Ascending aorta (tissue), 2 donors: ENCODE measurements at regions of chrX and their contacts with region 1.

Region 1: DNA sequence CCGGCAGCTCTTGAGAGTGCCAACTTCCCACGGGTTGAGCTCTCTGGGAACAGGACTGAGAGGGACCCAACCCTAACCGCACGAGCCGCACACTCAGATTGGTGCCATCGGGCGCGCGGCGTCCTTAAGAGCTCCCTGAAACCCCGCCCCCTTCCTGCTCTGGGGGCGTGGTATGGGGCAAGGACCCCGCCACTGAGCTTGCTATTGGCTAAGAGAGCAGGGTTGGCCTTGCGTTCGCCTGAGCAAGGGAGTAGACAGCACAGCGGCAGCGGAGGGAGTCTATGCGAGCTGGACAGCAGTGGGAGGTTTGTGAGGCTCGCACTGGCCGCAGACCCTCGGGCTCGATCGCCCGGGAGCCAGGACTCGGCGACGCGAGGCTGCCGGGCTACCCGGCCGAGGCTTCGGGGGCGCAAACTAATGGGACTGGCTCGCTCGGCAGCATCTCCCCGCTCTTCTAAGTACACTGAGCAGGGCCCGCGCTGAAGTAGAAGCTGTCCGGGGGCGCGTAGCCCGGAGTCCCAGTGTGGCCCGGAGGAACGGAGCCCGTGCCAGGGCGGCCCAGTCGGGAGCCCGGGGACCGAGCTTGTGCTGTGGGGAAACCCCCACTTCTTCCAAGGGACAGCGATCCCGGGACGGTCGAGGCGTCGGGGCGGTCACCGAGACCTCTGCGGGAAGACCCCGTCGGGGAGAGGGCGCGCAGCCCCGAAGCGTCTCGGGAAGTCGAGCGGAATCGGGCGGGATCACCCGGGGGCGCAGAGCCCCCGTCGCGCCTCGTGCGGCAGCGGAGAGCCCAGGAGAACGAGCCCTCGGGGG is at the start of gene EFNB1:
- DNase-seq: peak; percentile 84 to 96
- H3K4me3 ChIP-seq: peak within 1 kb of the TSS; percentile 59 to 65
- H3K27ac ChIP-seq: peak within 1 kb of the TSS; percentile 76 to 82
- H3K4me1 ChIP-seq: no peaks in the 10 kb centered on the region
- H3K27me3 ChIP-seq: no peaks in the 10 kb centered on the region
- CTCF ChIP-seq: no peak
- total RNA-seq, gene EFNB1: 53.4 TPM

Region 2: GRCh38 chrX:68878977-68879645 is 50.2 kb after region 1 on chrX:
- intact Hi-C with region 1: no loop called
- DNase-seq: no peak
- H3K4me3 ChIP-seq: no peak overlapping the region
- H3K27ac ChIP-seq: no peak overlapping the region
- H3K4me1 ChIP-seq: no peaks in the 10 kb centered on the region
- H3K27me3 ChIP-seq: no peaks in the 10 kb centered on the region
- CTCF ChIP-seq: no peak

Region 3: DNA sequence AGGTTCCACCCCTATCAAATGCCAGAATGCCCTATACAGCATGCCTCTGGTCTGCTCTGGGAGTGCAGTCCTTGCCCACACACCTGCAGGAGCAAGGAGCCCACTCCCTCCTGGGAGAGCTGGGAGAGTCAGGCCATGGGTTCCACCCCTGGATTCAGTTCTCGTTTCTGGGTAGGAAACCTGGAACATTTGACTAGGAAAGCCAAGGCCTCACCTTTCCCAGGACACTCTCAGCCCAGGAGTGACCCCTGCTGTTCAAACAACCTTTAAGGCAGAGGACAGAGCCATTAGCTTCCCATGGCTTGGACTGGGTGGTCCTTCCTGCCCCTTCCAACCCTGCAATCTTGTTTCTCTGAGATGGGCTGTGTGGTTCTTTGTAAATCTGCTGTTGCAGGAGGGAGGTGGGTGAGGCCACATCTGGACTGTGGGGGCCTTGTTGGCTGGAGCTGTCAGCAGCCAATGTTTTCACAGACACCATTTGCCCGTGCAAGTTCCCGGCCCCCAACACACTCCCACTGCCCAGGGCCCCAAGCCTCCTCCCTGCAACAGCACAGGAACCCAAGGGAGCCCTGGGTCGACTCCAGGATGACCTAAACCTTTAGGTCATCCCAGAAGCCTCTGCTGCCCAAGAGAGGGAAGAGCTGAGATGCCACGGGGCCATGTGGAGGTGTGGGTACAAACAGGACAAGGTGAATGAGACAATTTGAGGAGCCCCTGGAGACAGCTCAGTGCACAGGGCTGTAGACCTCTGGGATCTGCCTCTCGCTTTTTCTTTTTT is 231.9 kb after region 1 on chrX:
- intact Hi-C with region 1: loop called (anchors 1 kb)
- DNase-seq: peak in 1 of 2 donors; percentile 63
- H3K4me3 ChIP-seq: no peak overlapping the region
- H3K27ac ChIP-seq: no peak overlapping the region
- H3K4me1 ChIP-seq: no peaks in the 10 kb centered on the region
- H3K27me3 ChIP-seq: no peaks in the 10 kb centered on the region
- CTCF ChIP-seq: peak in 2 of 3 experiments; percentile 30 to 52

Region 4: GRCh38 chrX:69222103-69223090 is 393.5 kb after region 1 on chrX:
- intact Hi-C with region 1: loop called (anchors 1 kb)
- DNase-seq: peak in 1 of 2 donors; percentile 68
- H3K4me3 ChIP-seq: no peak overlapping the region
- H3K27ac ChIP-seq: no peak overlapping the region
- H3K4me1 ChIP-seq: no peaks in the 10 kb centered on the region
- H3K27me3 ChIP-seq: no peaks in the 10 kb centered on the region
- CTCF ChIP-seq: peak; percentile 66 to 73 (median 67)

Region 5: DNA sequence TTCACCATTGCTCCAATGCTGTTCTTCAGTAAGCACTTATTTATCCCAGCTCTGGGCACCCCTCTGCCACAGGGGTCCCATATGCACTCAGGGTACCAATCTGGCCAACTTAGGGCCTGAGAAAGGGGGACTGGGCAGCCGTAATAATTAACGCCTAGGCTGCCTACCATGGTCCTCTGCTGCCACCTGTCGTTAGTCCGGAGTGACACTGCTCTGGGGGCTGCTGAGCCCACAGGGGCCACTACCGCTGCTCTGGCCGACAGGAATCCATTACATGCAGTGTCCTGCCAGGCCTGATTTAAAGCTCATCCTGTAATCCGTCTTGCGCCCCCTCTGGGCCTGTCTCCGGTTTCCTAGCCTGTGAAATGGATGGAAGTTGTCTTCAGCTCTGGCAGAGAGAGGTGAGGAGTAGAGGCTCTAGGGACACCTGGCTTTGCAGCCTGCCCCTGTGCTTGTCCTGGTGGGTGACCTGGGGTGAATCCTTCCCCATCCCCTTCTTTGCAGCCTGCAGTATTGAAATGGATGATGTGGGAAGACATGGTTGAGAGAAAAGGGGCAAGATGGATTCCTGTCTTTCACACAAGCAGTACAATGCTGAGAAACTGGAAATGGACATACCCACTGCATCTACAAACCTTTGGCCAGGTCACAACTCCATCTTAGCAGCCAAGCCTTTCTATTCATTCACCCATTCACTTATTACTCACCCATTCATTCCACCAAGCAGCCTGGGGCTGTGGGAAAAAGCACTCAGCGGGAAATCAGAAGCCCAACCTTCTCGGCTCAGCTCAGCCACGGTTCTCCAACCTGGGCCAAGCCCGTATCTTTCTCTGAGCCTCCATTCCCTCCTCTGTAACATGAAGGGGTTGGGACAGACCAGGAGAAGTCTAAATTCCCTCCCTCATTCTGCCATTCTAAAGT is 558.9 kb after region 1 on chrX:
- intact Hi-C with region 1: loop called (anchors 5 kb)
- DNase-seq: no peak
- H3K4me3 ChIP-seq: no peak overlapping the region
- H3K27ac ChIP-seq: no peak overlapping the region
- H3K4me1 ChIP-seq: no peaks in the 10 kb centered on the region
- H3K27me3 ChIP-seq: no peaks in the 10 kb centered on the region
- CTCF ChIP-seq: peak; percentile 52 to 83 (median 71)

Region 6: GRCh38 chrX:69398881-69399280 is 569.9 kb after region 1 on chrX:
- intact Hi-C with region 1: no loop called
- DNase-seq: no peak
- H3K4me3 ChIP-seq: no peak overlapping the region
- H3K27ac ChIP-seq: no peak overlapping the region
- H3K4me1 ChIP-seq: no peaks in the 10 kb centered on the region
- H3K27me3 ChIP-seq: no peaks in the 10 kb centered on the region
- CTCF ChIP-seq: no peak